ENCODE measurements at regions of chr2 and their contacts with region 1.

Region 1: GRCh38 chr2:55961318-55961911 is 37.8 kb upstream of the EFEMP1 start:
- DNase-seq: peak; percentile 50
- ATAC-seq: peak; percentile 77
- H3K4me3 ChIP-seq: no peak overlapping the region
- H3K27ac ChIP-seq: no peak overlapping the region
- H3K4me1 ChIP-seq: peaks cover 2 to 15% of the 10 kb centered on the region in 2 experiments; a peak in 2 of 4 replicates
- H3K27me3 ChIP-seq: no peaks in the 10 kb centered on the region
- CTCF ChIP-seq: peak; percentile 57 to 77 (median 75)
- POLR2A ChIP-seq: no peak
- RAD21 ChIP-seq: peak; percentile 79

Region 2: GRCh38 chr2:55093381-55093780 is 868.0 kb before region 1 on chr2:
- CTCF ChIA-PET with region 1: no interaction called
- POLR2A ChIA-PET with region 1: no interaction called
- RAD21 ChIA-PET with region 1: no interaction called
- intact Hi-C with region 1: no loop called
- DNase-seq: peak; percentile 38
- ATAC-seq: peak; percentile 89
- H3K4me3 ChIP-seq: peak overlapping the region in 1 of 2 experiments; percentile 48; a peak in 2 of 4 replicates
- H3K27ac ChIP-seq: peak overlapping the region; percentile 23; the same call in 1 of the 2 replicates
- H3K4me1 ChIP-seq: peaks cover 9 to 38% of the 10 kb centered on the region in 2 experiments
- H3K27me3 ChIP-seq: no peaks in the 10 kb centered on the region
- CTCF ChIP-seq: no peak
- POLR2A ChIP-seq: no peak
- RAD21 ChIP-seq: no peak

Region 3: GRCh38 chr2:55705027-55705653 is 256.3 kb before region 1 on chr2:
- CTCF ChIA-PET with region 1: no interaction called
- POLR2A ChIA-PET with region 1: no interaction called
- RAD21 ChIA-PET with region 1: interaction called in 1 of 2 experiments, 10 read pairs
- intact Hi-C with region 1: no loop called
- DNase-seq: no peak
- ATAC-seq: no peak
- H3K4me3 ChIP-seq: no peak overlapping the region
- H3K27ac ChIP-seq: no peak overlapping the region
- H3K4me1 ChIP-seq: no peaks in the 10 kb centered on the region
- H3K27me3 ChIP-seq: 0 out of 2 replicates have a peak, but pooled peaks cover 3% of the 10 kb centered on the region
- CTCF ChIP-seq: no peak
- POLR2A ChIP-seq: no peak
- RAD21 ChIP-seq: no peak

Region 4: GRCh38 chr2:55718165-55719008 is 243.0 kb before region 1 on chr2:
- CTCF ChIA-PET with region 1: interaction called, 11 read pairs
- POLR2A ChIA-PET with region 1: no interaction called
- RAD21 ChIA-PET with region 1: interaction called in 1 of 2 experiments, 3 read pairs
- intact Hi-C with region 1: loop called (anchors 2 kb)
- DNase-seq: peak; percentile 59
- ATAC-seq: peak; percentile 76
- H3K4me3 ChIP-seq: no peak overlapping the region
- H3K27ac ChIP-seq: no peak overlapping the region
- H3K4me1 ChIP-seq: no peaks in the 10 kb centered on the region
- H3K27me3 ChIP-seq: no peaks in the 10 kb centered on the region
- CTCF ChIP-seq: peak; percentile 80 to 94 (median 82)
- POLR2A ChIP-seq: no peak
- RAD21 ChIP-seq: peak; percentile 88

Region 5: GRCh38 chr2:55771612-55772011 is 189.8 kb before region 1 on chr2:
- CTCF ChIA-PET with region 1: interaction called, 101 read pairs
- POLR2A ChIA-PET with region 1: no interaction called
- RAD21 ChIA-PET with region 1: interaction called, 4 to 13 read pairs
- intact Hi-C with region 1: loop called (anchors 1 kb)
- DNase-seq: peak; percentile 16
- ATAC-seq: no peak
- H3K4me3 ChIP-seq: no peak overlapping the region
- H3K27ac ChIP-seq: no peak overlapping the region
- H3K4me1 ChIP-seq: no peaks in the 10 kb centered on the region
- H3K27me3 ChIP-seq: no peaks in the 10 kb centered on the region
- CTCF ChIP-seq: peak; percentile 48 to 74 (median 71); a peak in 5 of 6 replicates
- POLR2A ChIP-seq: no peak
- RAD21 ChIP-seq: peak; percentile 77

Region 6: DNA sequence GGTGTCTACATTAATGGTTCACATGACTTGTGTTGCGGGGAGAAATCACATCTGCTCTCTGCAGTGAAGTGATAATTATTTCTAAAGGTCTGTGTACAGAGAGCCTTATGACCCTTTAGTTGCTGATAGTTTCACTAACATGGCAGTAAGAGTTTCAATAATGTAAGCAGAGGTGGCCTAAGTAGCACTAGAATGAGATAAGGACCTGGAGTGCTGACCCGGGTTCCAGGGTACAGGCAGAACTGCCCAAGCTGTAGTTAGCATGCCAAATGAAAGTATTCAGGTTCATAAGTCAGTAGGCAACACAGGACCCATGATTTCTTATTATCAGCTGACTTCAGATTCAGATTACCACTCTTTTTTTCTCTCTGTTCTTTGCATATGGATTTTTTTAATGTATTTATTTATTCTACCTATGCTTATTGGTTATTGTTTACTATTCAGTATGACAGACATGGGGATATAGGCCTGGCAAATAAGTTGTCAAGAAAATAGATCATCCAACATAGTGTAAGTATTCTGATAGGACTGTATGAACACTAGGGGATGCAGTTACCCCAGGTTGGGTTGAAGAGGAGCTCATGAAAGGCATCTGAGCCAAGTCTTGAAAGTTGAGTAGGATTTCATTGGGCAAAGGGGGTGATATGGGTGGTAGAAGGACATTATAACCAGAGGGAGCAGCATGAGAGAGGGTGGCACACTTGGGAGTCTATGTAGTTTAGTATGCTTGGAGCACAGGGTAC is 327.6 kb after region 1 on chr2:
- CTCF ChIA-PET with region 1: no interaction called
- POLR2A ChIA-PET with region 1: no interaction called
- RAD21 ChIA-PET with region 1: no interaction called
- intact Hi-C with region 1: no loop called
- DNase-seq: no peak
- ATAC-seq: no peak; the same call in 1 of the 2 replicates
- H3K4me3 ChIP-seq: no peak overlapping the region
- H3K27ac ChIP-seq: no peak overlapping the region
- H3K4me1 ChIP-seq: peaks cover 0 to 17% of the 10 kb centered on the region in 2 experiments; a peak in 2 of 4 replicates
- H3K27me3 ChIP-seq: no peaks in the 10 kb centered on the region
- CTCF ChIP-seq: 0 out of 6 replicates have a peak, but pooled peaks of 1 of the 3 experiments have one; percentile 18
- POLR2A ChIP-seq: no peak
- RAD21 ChIP-seq: peak; percentile 38